B cell (primary cell): ENCODE measurements at regions of chr7 and their contacts with region 1.

Region 1: DNA sequence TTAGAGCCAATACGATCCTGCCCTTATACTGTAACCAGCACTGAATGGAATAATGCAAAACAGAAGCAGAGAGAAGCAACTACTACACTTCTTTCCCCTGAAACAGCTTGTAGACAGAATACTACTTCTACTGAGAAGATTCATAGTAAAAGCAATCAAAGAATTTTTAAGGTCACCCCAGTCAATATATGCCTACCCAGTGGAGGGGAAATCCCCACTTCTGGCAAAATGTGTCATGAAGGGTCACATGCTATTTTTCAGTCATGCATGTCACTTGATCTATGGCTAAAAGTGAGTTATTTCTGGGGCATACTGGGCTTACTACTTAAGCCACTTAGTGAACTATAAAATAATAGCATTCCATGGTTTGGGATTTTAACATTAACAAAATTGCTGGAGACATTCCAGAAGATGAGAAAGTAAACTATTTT is 25.6 kb downstream of the IRF5 start:
- DNase-seq: peak; percentile 87
- ATAC-seq: peak; percentile 95
- H3K4me3 ChIP-seq: peak overlapping the region in 1 of 5 experiments; percentile 36
- H3K4me3 Mint-ChIP-seq: peak overlapping the region; percentile 74
- H3K27ac ChIP-seq: peak overlapping the region; percentile 80 to 92
- H3K27ac Mint-ChIP-seq: peak overlapping the region; percentile 91
- H3K4me1 ChIP-seq: peaks cover 16% of the 10 kb centered on the region in 2 donors
- H3K4me1 Mint-ChIP-seq: peaks cover 27% of the 10 kb centered on the region
- H3K27me3 ChIP-seq: no peaks in the 10 kb centered on the region
- H3K27me3 Mint-ChIP-seq: no peaks in the 10 kb centered on the region
- CTCF ChIP-seq: no peak

Region 2: DNA sequence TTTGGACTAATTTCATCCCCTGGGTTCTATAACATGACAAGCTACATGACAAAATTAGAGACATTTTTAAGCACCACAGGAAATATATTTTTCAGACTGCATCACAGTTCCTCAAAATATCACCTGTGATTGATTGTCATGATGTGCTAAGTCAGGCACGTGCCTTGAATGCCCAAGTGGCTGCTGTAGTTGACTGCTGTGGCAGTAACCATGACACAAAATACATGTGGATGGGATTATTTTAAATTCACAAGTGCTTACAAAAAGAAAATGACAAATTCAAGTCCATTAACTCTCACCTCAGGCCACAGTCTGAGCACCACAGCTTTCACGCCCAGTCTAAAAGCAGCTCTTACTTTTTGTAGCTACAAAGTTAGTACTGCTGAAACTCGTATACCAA is 46.1 kb after region 1 on chr7:
- CTCF ChIA-PET with region 1: no interaction called
- POLR2A ChIA-PET with region 1: no interaction called
- intact Hi-C with region 1: loop called (anchors 1 kb)
- DNase-seq: peak; percentile 79
- ATAC-seq: peak; percentile 90
- H3K4me3 ChIP-seq: no peak overlapping the region
- H3K4me3 Mint-ChIP-seq: peak overlapping the region; percentile 30
- H3K27ac ChIP-seq: peak overlapping the region; percentile 77 to 92
- H3K27ac Mint-ChIP-seq: peak overlapping the region; percentile 33
- H3K4me1 ChIP-seq: peaks cover 15 to 19% of the 10 kb centered on the region in 2 donors
- H3K4me1 Mint-ChIP-seq: peaks cover 36% of the 10 kb centered on the region
- H3K27me3 ChIP-seq: no peaks in the 10 kb centered on the region
- H3K27me3 Mint-ChIP-seq: no peaks in the 10 kb centered on the region
- CTCF ChIP-seq: no peak